ENCODE measurements at regions of chr3 and their contacts with region 1.

Region 1: GRCh38 chr3:127652231-127652995 is 20.3 kb upstream of the ABTB1 start:
- DNase-seq: peak; percentile 76

Region 2: DNA sequence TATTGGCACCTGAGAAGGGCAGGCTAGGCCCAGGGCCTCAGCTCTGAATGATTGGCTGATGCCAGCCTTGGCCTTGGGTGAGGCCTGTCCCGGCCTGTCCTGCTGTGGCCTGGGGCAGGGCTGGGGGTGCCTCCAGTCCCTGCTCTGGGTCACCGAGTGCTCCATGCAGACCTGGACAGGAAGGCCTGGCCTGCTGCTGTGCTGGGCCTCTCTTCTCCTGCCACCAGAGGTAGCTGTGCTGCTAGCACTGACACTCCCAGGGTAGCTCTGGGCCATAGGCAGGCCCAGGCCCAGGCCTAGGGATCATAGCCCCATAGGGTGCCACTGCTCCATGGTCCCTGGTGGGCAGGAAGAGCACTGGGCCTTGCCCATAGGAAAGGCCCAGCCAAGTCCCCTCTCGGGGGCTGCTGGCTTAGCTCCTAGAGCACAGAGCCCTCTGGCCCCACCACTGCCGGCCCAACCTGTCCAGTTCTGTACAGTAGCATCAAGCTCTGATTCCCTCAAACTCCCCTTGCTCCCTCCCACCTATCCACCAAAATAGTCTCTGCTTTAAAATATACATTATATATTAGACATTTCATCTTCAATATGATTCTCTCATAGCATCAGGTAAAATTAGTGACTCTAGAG is 38.5 kb after region 1 on chr3:
- intact Hi-C with region 1: loop called (anchors 5 kb)
- DNase-seq: peak; percentile 77

Region 3: GRCh38 chr3:127831723-127832172 is 179.3 kb after region 1 on chr3:
- intact Hi-C with region 1: loop called (anchors 2 kb)
- DNase-seq: no peak

Region 4: GRCh38 chr3:128060473-128061381 is 408.3 kb after region 1 on chr3:
- intact Hi-C with region 1: no loop called
- DNase-seq: no peak

Measured in cardiac septum (tissue), 1 donor.